Esophagus muscularis mucosa (tissue), 4 donors: ENCODE measurements at regions of chr2 and their contacts with region 1.

Region 1: DNA sequence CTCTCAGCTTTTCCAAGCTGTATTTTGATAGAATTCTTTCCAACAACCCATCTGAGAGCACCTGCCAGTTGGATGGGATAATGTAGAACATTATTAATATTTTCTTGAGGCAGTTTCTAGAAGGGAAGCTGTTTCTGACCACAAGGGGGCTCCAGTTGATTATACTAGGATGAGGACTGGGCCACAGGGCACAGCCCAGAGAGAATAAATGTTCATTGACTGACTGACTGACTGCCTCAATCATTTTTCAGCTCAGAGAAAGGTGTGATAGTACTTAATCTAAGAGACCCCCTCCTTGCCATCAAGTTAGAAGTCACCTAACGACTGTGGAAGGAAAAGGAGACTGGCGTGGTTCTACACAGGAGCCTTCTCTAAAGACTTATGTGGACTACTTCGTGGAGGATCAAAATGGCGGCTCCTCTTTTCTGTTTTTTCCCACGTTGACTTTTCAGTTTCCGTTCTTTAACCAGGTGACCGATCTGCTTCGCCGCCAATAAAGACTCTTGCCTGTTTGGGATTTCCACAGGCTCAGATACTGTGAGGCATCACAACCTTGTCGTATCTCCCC is 31.9 kb upstream of the CREG2 start:
- DNase-seq: no peak
- H3K4me3 ChIP-seq: no peak overlapping the region
- H3K27ac ChIP-seq: no peak overlapping the region
- H3K4me1 ChIP-seq: peaks cover 0 to 6% (median 0%) of the 10 kb centered on the region in 4 donors
- H3K27me3 ChIP-seq: peaks cover 0 to 9% (median 0%) of the 10 kb centered on the region in 4 donors
- CTCF ChIP-seq: peak; percentile 72 to 84 (median 76)
- EP300 ChIP-seq: no peak
- POLR2A ChIP-seq: no peak

Region 2: DNA sequence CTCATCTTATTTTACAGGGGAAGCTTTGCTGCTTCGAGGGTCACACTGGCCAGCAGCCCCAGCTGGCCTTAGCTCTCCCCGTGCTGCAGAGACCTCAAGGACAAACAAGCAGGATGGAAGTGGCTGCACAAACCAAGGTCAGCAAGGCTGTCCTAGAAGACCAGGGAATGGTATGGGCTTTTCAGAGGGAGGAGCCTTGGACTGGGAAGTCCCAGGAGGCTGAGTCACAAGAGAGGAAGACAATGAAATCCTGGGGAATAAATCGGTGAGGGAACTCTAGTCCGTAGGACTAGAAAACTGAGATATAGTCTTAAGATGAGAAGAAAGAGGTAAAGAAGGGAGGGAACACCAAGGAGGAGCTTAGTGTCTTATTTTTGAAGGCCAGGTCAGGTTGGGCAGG is 47.5 kb before region 1 on chr2:
- intact Hi-C with region 1: no loop called
- DNase-seq: no peak
- H3K4me3 ChIP-seq: no peak overlapping the region
- H3K27ac ChIP-seq: no peak overlapping the region
- H3K4me1 ChIP-seq: no peaks in the 10 kb centered on the region
- H3K27me3 ChIP-seq: no peaks in the 10 kb centered on the region
- CTCF ChIP-seq: no peak
- EP300 ChIP-seq: no peak
- POLR2A ChIP-seq: no peak

Region 3: DNA sequence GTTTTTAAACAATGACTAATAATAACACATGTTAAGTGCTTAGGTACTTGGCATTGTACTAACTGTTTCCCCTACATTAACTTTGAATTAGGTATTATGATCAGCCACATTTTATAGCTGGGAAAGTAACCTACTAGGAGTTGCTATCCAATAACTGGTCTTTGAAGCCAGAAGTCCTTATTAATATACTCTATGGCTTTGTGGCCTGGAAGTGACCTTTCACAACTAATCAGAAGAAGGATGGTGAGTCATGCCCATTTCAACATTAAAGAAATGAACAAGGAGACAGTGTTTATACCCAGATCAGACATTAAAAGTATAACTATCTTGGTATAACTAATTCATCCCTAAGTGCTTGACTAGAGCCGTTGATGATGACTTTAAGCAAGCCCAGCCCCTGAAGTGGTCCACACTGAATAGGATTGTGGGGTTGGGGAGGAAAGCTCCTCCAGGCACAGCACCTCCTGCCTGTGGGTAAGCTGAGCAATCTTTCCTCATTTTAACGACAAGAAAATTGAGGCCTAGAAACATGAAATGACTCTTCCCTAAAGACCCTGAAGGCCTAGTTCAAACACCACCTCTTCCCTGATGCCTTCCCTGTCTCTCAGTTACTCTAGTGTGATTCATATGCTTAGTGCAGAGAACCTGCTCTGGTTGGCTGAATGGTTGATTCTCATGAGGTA is 127.3 kb after region 1 on chr2:
- intact Hi-C with region 1: no loop called
- DNase-seq: no peak
- H3K4me3 ChIP-seq: no peak overlapping the region
- H3K27ac ChIP-seq: no peak overlapping the region
- H3K4me1 ChIP-seq: peaks cover 0 to 7% (median 0%) of the 10 kb centered on the region in 4 donors
- H3K27me3 ChIP-seq: no peaks in the 10 kb centered on the region
- CTCF ChIP-seq: no peak
- EP300 ChIP-seq: no peak
- POLR2A ChIP-seq: no peak

Region 4: DNA sequence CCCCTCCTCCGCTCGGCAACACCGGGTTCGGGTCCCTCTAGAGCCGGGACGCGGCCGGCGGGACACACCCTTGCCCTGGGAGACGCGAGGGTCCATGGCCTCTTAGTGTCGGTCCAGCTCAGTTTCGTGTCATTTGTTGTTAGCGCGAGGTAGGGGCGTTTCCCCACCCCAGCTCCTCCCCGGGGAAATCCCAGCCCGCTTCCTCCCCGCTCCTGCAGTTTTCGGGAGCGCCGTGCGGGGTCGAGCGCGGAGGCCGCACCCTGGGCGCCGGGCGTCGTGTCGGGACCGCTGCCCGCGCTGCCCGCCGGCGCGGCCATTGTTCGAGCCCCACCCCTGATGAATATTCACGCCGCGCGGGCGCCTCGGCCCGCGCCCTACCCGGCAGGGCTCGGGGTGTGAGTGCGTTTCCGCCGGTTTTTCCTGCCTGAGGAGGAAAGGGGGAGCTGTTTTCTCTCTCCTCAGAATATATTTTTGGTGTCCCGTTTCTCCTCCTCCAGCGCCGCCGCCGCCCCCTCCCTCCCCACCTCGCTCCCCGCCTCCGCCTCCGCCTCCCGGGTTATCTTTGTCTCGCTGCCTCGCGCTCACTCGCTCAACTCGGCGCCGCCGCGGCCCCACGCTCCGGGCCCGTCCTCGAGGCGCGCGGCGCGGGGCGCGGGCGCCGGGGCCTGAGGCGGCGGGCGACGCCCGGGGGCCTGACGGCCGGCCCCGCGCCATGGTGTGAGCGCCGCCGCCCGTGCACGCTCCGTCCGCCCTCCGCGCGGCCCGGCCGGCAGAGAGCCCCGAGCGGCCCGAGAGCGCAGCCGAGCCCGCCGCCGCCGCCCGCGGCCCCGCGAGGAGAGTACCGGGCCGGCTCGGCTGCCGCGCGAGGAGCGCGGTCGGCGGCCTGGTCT is 278.2 kb after region 1 on chr2 and contains the start of gene MAP4K4:
- intact Hi-C with region 1: loop called (anchors 10 kb)
- DNase-seq: peak; percentile 96
- H3K4me3 ChIP-seq: peak within 1 kb of the TSS; percentile 72 to 87 (median 80)
- H3K27ac ChIP-seq: peak within 1 kb of the TSS; percentile 85 to 92 (median 90)
- H3K4me1 ChIP-seq: peaks cover 19 to 51% (median 42%) of the 10 kb centered on the region in 4 donors
- H3K27me3 ChIP-seq: no peaks in the 10 kb centered on the region
- CTCF ChIP-seq: peak in 1 of 3 experiments; percentile 33
- EP300 ChIP-seq: no peak
- POLR2A ChIP-seq: no peak
- total RNA-seq, gene MAP4K4: 37.8 to 59.0 (median 51.7) TPM

Region 5: DNA sequence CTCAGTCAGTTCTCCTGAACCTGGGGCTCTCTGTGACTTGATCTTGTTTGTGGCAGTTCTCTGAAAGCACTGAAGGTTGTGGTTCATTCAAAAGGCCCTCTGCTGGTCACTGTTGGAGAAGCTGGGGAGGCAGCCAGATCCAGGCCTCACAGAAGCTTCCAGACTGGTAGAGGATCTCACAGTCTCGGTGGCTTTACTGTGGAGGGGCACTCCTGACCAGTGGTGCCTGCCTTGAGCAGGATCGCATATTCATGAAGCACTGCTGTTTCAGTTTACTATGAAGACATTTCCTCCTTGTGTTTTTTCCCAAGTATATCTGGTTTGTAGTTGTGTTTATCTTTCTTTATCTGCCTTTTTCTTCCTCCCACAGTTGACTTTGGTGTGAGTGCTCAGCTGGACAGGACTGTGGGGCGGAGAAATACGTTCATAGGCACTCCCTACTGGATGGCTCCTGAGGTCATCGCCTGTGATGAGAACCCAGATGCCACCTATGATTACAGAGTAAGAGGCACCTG is 412.2 kb after region 1 on chr2:
- intact Hi-C with region 1: loop called (anchors 2 kb)
- DNase-seq: peak; percentile 94
- H3K4me3 ChIP-seq: no peak overlapping the region
- H3K27ac ChIP-seq: peak overlapping the region; percentile 8 to 41 (median 23)
- H3K4me1 ChIP-seq: peaks cover 48 to 53% (median 52%) of the 10 kb centered on the region in 4 donors
- H3K27me3 ChIP-seq: no peaks in the 10 kb centered on the region
- CTCF ChIP-seq: peak; percentile 73 to 86 (median 75)
- EP300 ChIP-seq: no peak
- POLR2A ChIP-seq: no peak